ENCODE measurements at regions of chr1 and their contacts with region 1.

Region 1: GRCh38 chr1:19533626-19534025 is 48.3 kb upstream of the CAPZB start:
- DNase-seq: no peak
- H3K4me3 ChIP-seq: no peak overlapping the region
- H3K27ac ChIP-seq: no peak overlapping the region
- H3K4me1 ChIP-seq: no peaks in the 10 kb centered on the region
- H3K27me3 ChIP-seq: no peaks in the 10 kb centered on the region
- CTCF ChIP-seq: no peak

Region 2: GRCh38 chr1:18091660-18092446 is 1441.8 kb before region 1 on chr1:
- CTCF ChIA-PET with region 1: no interaction called
- POLR2A ChIA-PET with region 1: interaction called, 15 read pairs
- intact Hi-C with region 1: no loop called
- DNase-seq: no peak
- H3K4me3 ChIP-seq: no peak overlapping the region
- H3K27ac ChIP-seq: no peak overlapping the region
- H3K4me1 ChIP-seq: no peaks in the 10 kb centered on the region
- H3K27me3 ChIP-seq: peaks cover 11% of the 10 kb centered on the region
- CTCF ChIP-seq: no peak